CD8-positive, alpha-beta T cell (primary cell): ENCODE measurements at regions of chr16 and their contacts with region 1.

Region 1: GRCh38 chr16:79601931-79602627 is 1.5 kb upstream of the MAF start:
- DNase-seq: peak; percentile 63 to 87 (median 81)
- ATAC-seq: no peak
- H3K4me3 ChIP-seq: peak overlapping the region; percentile 62 to 83
- H3K4me3 Mint-ChIP-seq: peak overlapping the region; percentile 91
- H3K27ac ChIP-seq: peak overlapping the region in 1 of 2 experiments; percentile 17
- H3K27ac Mint-ChIP-seq: peak overlapping the region; percentile 42
- H3K4me1 ChIP-seq: peaks cover 12% of the 10 kb centered on the region
- H3K4me1 Mint-ChIP-seq: peaks cover 26% of the 10 kb centered on the region
- H3K27me3 ChIP-seq: peaks cover 0 to 13% of the 10 kb centered on the region in 2 experiments
- H3K27me3 Mint-ChIP-seq: peaks cover 35% of the 10 kb centered on the region
- CTCF ChIP-seq: peak; percentile 92

Region 2: GRCh38 chr16:78122774-78123315 is 1479.2 kb before region 1 on chr16:
- CTCF ChIA-PET with region 1: interaction called, 9 read pairs
- POLR2A ChIA-PET with region 1: no interaction called
- intact Hi-C with region 1: loop called in 1 of 2 experiments (anchors 2 kb)
- DNase-seq: peak in 3 of 9 experiments; percentile 9 to 63 (median 49)
- ATAC-seq: peak; percentile 49
- H3K4me3 ChIP-seq: no peak overlapping the region
- H3K4me3 Mint-ChIP-seq: no peak overlapping the region
- H3K27ac ChIP-seq: no peak overlapping the region
- H3K27ac Mint-ChIP-seq: no peak overlapping the region
- H3K4me1 ChIP-seq: no peaks in the 10 kb centered on the region
- H3K4me1 Mint-ChIP-seq: peaks cover 3% of the 10 kb centered on the region
- H3K27me3 ChIP-seq: no peaks in the 10 kb centered on the region
- H3K27me3 Mint-ChIP-seq: no peaks in the 10 kb centered on the region
- CTCF ChIP-seq: peak; percentile 70

Region 3: GRCh38 chr16:78742501-78743283 is 859.4 kb before region 1 on chr16:
- CTCF ChIA-PET with region 1: no interaction called
- POLR2A ChIA-PET with region 1: no interaction called
- intact Hi-C with region 1: loop called (anchors 2 to 10 kb)
- DNase-seq: peak; percentile 47 to 90 (median 77)
- ATAC-seq: peak; percentile 93
- H3K4me3 ChIP-seq: peak overlapping the region; percentile 6 to 34
- H3K4me3 Mint-ChIP-seq: peak overlapping the region; percentile 78
- H3K27ac ChIP-seq: peak overlapping the region; percentile 66 to 90
- H3K27ac Mint-ChIP-seq: peak overlapping the region; percentile 97
- H3K4me1 ChIP-seq: peaks cover 20% of the 10 kb centered on the region
- H3K4me1 Mint-ChIP-seq: peaks cover 32% of the 10 kb centered on the region
- H3K27me3 ChIP-seq: no peaks in the 10 kb centered on the region
- H3K27me3 Mint-ChIP-seq: no peaks in the 10 kb centered on the region
- CTCF ChIP-seq: no peak

Region 4: GRCh38 chr16:79083508-79084299 is 518.4 kb before region 1 on chr16:
- CTCF ChIA-PET with region 1: no interaction called
- POLR2A ChIA-PET with region 1: no interaction called
- intact Hi-C with region 1: loop called in 1 of 2 experiments (anchors 5 kb)
- DNase-seq: no peak
- ATAC-seq: no peak
- H3K4me3 ChIP-seq: no peak overlapping the region
- H3K4me3 Mint-ChIP-seq: peak overlapping the region; percentile 29
- H3K27ac ChIP-seq: no peak overlapping the region
- H3K27ac Mint-ChIP-seq: no peak overlapping the region
- H3K4me1 ChIP-seq: no peaks in the 10 kb centered on the region
- H3K4me1 Mint-ChIP-seq: peaks cover 8% of the 10 kb centered on the region
- H3K27me3 ChIP-seq: no peaks in the 10 kb centered on the region
- H3K27me3 Mint-ChIP-seq: no peaks in the 10 kb centered on the region
- CTCF ChIP-seq: no peak

Region 5: GRCh38 chr16:79278506-79278905 is 323.6 kb before region 1 on chr16:
- CTCF ChIA-PET with region 1: no interaction called
- POLR2A ChIA-PET with region 1: no interaction called
- intact Hi-C with region 1: loop called (anchors 5 kb)
- DNase-seq: peak; percentile 31 to 89 (median 54)
- ATAC-seq: peak; percentile 87
- H3K4me3 ChIP-seq: no peak overlapping the region
- H3K4me3 Mint-ChIP-seq: peak overlapping the region; percentile 35
- H3K27ac ChIP-seq: peak overlapping the region; percentile 17 to 75
- H3K27ac Mint-ChIP-seq: peak overlapping the region; percentile 86
- H3K4me1 ChIP-seq: peaks cover 23% of the 10 kb centered on the region
- H3K4me1 Mint-ChIP-seq: peaks cover 51% of the 10 kb centered on the region
- H3K27me3 ChIP-seq: peaks cover 0 to 4% of the 10 kb centered on the region in 2 experiments
- H3K27me3 Mint-ChIP-seq: peaks cover 25% of the 10 kb centered on the region
- CTCF ChIP-seq: no peak